Activated CD8-positive, alpha-beta T cell treated with anti-CD3 and anti-CD28 coated beads for 36 hours (primary cell): ENCODE measurements at regions of chr12 and their contacts with region 1.

Region 1: GRCh38 chr12:64890873-64891468 is 66.5 kb downstream of the TBC1D30 start:
- DNase-seq: no peak
- ATAC-seq: peak; percentile 67
- H3K4me3 Mint-ChIP-seq: no peak overlapping the region
- H3K27ac Mint-ChIP-seq: no peak overlapping the region
- H3K4me1 Mint-ChIP-seq: peaks cover 5% of the 10 kb centered on the region
- H3K27me3 Mint-ChIP-seq: peaks cover 15% of the 10 kb centered on the region
- CTCF ChIP-seq: peak; percentile 93

Region 2: GRCh38 chr12:64796208-64796845 is 94.6 kb before region 1 on chr12:
- CTCF ChIA-PET with region 1: interaction called, 11 read pairs
- POLR2A ChIA-PET with region 1: no interaction called
- intact Hi-C with region 1: no loop called
- DNase-seq: peak; percentile 82
- ATAC-seq: peak; percentile 93
- H3K4me3 Mint-ChIP-seq: no peak overlapping the region
- H3K27ac Mint-ChIP-seq: no peak overlapping the region
- H3K4me1 Mint-ChIP-seq: no peaks in the 10 kb centered on the region
- H3K27me3 Mint-ChIP-seq: peaks cover 11% of the 10 kb centered on the region
- CTCF ChIP-seq: peak; percentile 90

Region 3: DNA sequence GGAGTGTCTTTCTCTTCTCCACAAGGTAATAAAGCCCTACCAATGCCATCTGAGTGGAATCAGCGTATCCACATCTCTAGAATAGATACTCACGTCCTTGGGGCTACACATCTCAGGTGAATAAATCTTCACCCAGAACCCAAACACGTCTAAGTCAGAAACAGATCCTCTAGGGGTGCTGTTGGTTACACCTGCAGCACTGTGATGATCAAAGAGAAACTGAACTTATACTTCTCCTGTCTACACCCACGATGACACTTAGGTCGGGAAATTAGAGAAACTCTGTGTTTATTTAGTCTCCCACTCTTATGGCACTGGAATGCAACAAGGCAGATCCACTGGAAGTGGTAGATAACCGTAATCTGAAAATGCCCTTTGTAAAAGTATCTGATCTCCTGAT is 184.0 kb after region 1 on chr12:
- CTCF ChIA-PET with region 1: no interaction called
- POLR2A ChIA-PET with region 1: no interaction called
- intact Hi-C with region 1: no loop called
- DNase-seq: no peak
- ATAC-seq: no peak
- H3K4me3 Mint-ChIP-seq: no peak overlapping the region
- H3K27ac Mint-ChIP-seq: no peak overlapping the region
- H3K4me1 Mint-ChIP-seq: no peaks in the 10 kb centered on the region
- H3K27me3 Mint-ChIP-seq: peaks cover 11% of the 10 kb centered on the region
- CTCF ChIP-seq: no peak

Region 4: DNA sequence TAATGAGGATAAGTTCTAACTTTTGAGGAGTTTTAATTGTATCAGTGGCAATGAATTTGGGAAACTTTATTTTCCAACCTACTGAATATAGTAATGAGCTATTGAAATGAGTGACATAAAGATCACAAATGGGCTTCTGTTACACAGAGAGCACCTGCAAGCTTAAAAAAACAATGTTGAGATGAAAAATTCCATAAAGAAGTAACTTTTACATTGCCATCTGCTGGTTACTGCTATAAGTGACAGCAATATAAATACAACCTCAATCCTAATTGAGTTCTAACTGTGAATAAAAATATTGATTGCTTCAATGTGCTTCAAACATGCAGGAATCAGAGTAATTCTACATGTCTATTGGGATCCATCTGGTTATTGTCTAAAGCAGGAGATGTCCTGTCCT is 216.0 kb after region 1 on chr12:
- CTCF ChIA-PET with region 1: interaction called, 14 read pairs
- POLR2A ChIA-PET with region 1: no interaction called
- intact Hi-C with region 1: no loop called
- DNase-seq: no peak
- ATAC-seq: no peak
- H3K4me3 Mint-ChIP-seq: no peak overlapping the region
- H3K27ac Mint-ChIP-seq: no peak overlapping the region
- H3K4me1 Mint-ChIP-seq: no peaks in the 10 kb centered on the region
- H3K27me3 Mint-ChIP-seq: peaks cover 8% of the 10 kb centered on the region
- CTCF ChIP-seq: peak; percentile 50

Region 5: DNA sequence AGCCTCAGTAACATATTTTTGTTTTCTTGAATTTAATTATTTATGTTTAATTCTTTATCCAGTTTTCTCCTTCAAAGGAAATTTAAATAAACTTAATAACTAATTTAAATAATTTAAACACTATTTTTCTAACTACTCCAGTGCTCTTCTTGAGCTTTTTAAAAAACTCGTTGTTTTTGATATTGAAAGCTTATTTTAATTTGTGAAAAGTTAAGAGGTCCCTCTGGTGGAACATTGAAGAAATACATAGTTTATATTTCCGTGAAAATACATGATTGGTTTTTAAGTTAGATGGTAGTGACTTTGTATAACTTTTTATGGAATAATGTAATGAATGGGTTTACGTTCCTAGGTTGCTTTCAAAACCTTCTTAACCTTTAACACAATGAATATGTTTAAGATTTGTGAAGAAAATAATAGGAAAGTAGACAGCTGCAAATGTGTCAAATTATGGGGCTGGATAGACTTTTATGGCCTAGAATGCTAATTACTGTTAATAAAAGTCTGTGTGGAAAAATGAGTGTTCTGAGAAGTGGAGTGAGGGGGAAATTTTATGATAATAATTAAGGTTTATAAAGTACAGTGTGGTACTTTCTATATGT is 341.6 kb after region 1 on chr12:
- CTCF ChIA-PET with region 1: interaction called, 34 read pairs
- POLR2A ChIA-PET with region 1: no interaction called
- intact Hi-C with region 1: loop called (anchors 5 kb)
- DNase-seq: no peak
- ATAC-seq: no peak
- H3K4me3 Mint-ChIP-seq: no peak overlapping the region
- H3K27ac Mint-ChIP-seq: no peak overlapping the region
- H3K4me1 Mint-ChIP-seq: peaks cover 10% of the 10 kb centered on the region
- H3K27me3 Mint-ChIP-seq: no peaks in the 10 kb centered on the region
- CTCF ChIP-seq: peak; percentile 63

Region 6: DNA sequence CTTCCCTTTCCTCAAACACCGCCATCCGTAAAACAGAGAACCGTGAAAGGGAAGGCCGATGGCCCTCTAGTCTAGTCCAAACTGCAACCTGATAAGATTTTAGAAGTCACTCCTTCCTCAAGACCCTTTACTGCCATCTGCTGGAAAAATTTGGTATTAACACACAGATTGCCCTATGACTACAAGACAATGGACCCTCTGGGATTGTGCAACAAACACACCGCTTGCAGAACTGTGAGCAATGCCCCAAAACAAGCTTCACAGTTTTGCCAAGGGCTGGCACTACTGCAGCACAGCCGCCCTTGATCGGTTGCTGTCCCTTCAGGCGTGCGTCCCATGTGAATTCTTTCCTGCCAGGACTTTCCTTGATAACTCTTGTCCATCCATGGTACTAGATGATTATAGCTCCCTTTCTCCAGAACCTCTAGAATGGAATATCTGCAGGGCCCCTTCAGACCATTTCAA is 1216.5 kb after region 1 on chr12:
- CTCF ChIA-PET with region 1: interaction called, 7 read pairs
- POLR2A ChIA-PET with region 1: no interaction called
- intact Hi-C with region 1: loop called (anchors 5 kb)
- DNase-seq: peak; percentile 58
- ATAC-seq: peak; percentile 93
- H3K4me3 Mint-ChIP-seq: no peak overlapping the region
- H3K27ac Mint-ChIP-seq: no peak overlapping the region
- H3K4me1 Mint-ChIP-seq: no peaks in the 10 kb centered on the region
- H3K27me3 Mint-ChIP-seq: peaks cover 9% of the 10 kb centered on the region
- CTCF ChIP-seq: peak; percentile 86